ENCODE measurements at regions of chr2 and their contacts with region 1.

Region 1: GRCh38 chr2:230712443-230713330 is at the start of gene CAB39:
- DNase-seq: peak; percentile 96
- ATAC-seq: peak; percentile 91
- H3K4me3 ChIP-seq: peak within 1 kb of the TSS; percentile 68 to 89 (median 78)
- H3K4me3 Mint-ChIP-seq: peak within 1 kb of the TSS; percentile 93
- H3K27ac ChIP-seq: peak within 1 kb of the TSS; percentile 59 to 84
- H3K27ac Mint-ChIP-seq: peak within 1 kb of the TSS; percentile 94
- H3K4me1 ChIP-seq: peaks cover 41% of the 10 kb centered on the region in 2 donors
- H3K4me1 Mint-ChIP-seq: peaks cover 48% of the 10 kb centered on the region
- H3K27me3 ChIP-seq: no peaks in the 10 kb centered on the region
- H3K27me3 Mint-ChIP-seq: no peaks in the 10 kb centered on the region
- CTCF ChIP-seq: peak; percentile 83
- total RNA-seq, gene CAB39: 72.5 and 75.7 TPM in 2 replicates

Region 2: GRCh38 chr2:230068016-230068650 is 644.6 kb before region 1 on chr2:
- CTCF ChIA-PET with region 1: interaction called, 5 read pairs
- POLR2A ChIA-PET with region 1: no interaction called
- intact Hi-C with region 1: loop called (anchors 5 kb)
- DNase-seq: peak; percentile 75
- ATAC-seq: peak; percentile 34
- H3K4me3 ChIP-seq: peak overlapping the region; percentile 47 to 76 (median 67)
- H3K4me3 Mint-ChIP-seq: peak overlapping the region; percentile 96
- H3K27ac ChIP-seq: no peak overlapping the region
- H3K27ac Mint-ChIP-seq: peak overlapping the region; percentile 83
- H3K4me1 ChIP-seq: peaks cover 8 to 18% of the 10 kb centered on the region in 2 donors
- H3K4me1 Mint-ChIP-seq: peaks cover 20% of the 10 kb centered on the region
- H3K27me3 ChIP-seq: peaks cover 0 to 9% (median 2%) of the 10 kb centered on the region in 4 experiments
- H3K27me3 Mint-ChIP-seq: peaks cover 13% of the 10 kb centered on the region
- CTCF ChIP-seq: no peak

Region 3: GRCh38 chr2:230160112-230160660 is 552.5 kb before region 1 on chr2:
- CTCF ChIA-PET with region 1: no interaction called
- POLR2A ChIA-PET with region 1: no interaction called
- intact Hi-C with region 1: no loop called
- DNase-seq: peak; percentile 71
- ATAC-seq: peak; percentile 63
- H3K4me3 ChIP-seq: no peak overlapping the region
- H3K4me3 Mint-ChIP-seq: no peak overlapping the region
- H3K27ac ChIP-seq: no peak overlapping the region
- H3K27ac Mint-ChIP-seq: peak overlapping the region; percentile 15
- H3K4me1 ChIP-seq: peaks cover 0 to 15% of the 10 kb centered on the region in 2 donors
- H3K4me1 Mint-ChIP-seq: peaks cover 21% of the 10 kb centered on the region
- H3K27me3 ChIP-seq: no peaks in the 10 kb centered on the region
- H3K27me3 Mint-ChIP-seq: no peaks in the 10 kb centered on the region
- CTCF ChIP-seq: peak; percentile 89

Region 4: GRCh38 chr2:230225486-230225885 is 487.2 kb before region 1 on chr2 and contains the start of gene SP140:
- CTCF ChIA-PET with region 1: no interaction called
- POLR2A ChIA-PET with region 1: no interaction called
- intact Hi-C with region 1: loop called (anchors 2 kb)
- DNase-seq: peak; percentile 91
- ATAC-seq: peak; percentile 77
- H3K4me3 ChIP-seq: peak within 1 kb of the TSS; percentile 51 to 96 (median 72)
- H3K4me3 Mint-ChIP-seq: peak within 1 kb of the TSS; percentile 88
- H3K27ac ChIP-seq: peak within 1 kb of the TSS; percentile 86 to 87
- H3K27ac Mint-ChIP-seq: peak within 1 kb of the TSS; percentile 96
- H3K4me1 ChIP-seq: peaks cover 58 to 74% of the 10 kb centered on the region in 2 donors
- H3K4me1 Mint-ChIP-seq: peaks cover 76% of the 10 kb centered on the region
- H3K27me3 ChIP-seq: no peaks in the 10 kb centered on the region
- H3K27me3 Mint-ChIP-seq: no peaks in the 10 kb centered on the region
- CTCF ChIP-seq: no peak
- total RNA-seq, gene SP140: 411 and 424 TPM in 2 replicates

Region 5: DNA sequence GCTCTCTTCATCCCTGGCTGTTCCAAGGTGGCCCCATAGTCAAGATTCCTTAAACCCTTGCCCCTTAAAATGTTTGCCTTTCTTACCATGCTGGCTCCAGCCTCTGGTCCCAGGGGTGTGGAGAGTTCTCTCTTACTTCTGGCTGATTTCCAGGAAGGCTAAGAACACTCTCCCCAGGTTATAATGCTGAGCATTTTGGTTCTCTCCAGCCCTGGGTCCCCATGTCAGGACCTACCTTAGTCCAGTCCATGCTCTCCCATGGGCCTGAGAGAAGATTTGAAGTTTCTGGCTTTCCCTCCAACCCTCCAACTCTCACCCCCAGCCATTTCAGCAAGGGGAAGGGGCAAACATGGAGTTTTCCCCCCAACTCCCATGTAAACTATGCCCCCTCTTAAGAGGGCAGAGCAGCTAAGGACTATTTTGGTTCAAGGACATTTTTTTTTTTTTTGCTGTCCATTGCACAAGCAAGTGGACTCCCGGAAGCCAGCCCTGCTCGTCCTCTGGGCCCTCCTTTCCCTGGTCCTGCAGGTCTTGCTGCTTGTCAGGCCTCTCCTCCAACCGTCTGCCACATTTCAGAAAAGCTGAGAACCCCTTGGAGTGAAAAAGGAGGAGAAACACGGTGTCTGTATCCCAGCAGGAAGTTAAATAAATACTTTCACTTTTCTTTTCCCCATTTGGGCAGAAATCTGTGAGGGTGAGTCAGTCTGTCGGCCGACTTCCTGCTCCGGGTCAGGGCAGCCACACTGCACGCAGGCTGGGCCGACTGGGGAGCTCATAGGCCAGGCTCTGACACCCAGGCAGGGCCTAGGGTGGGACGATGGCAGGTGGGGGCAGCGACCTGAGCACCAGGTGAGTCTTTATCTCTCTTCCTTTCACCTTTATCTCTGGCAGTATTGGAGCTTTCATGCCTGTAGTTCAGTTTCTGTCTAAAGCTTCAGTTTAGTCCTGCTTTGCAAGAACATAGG is 386.0 kb before region 1 on chr2 and contains the start of gene SP140L:
- CTCF ChIA-PET with region 1: interaction called, 3 read pairs
- POLR2A ChIA-PET with region 1: no interaction called
- intact Hi-C with region 1: loop called (anchors 5 kb)
- DNase-seq: peak; percentile 78
- ATAC-seq: peak; percentile 94
- H3K4me3 ChIP-seq: peak within 1 kb of the TSS; percentile 62 to 83 (median 72)
- H3K4me3 Mint-ChIP-seq: peak within 1 kb of the TSS; percentile 98
- H3K27ac ChIP-seq: peak within 1 kb of the TSS; percentile 95
- H3K27ac Mint-ChIP-seq: peak within 1 kb of the TSS; percentile 99
- H3K4me1 ChIP-seq: peaks cover 52 to 72% of the 10 kb centered on the region in 2 donors
- H3K4me1 Mint-ChIP-seq: peaks cover 73% of the 10 kb centered on the region
- H3K27me3 ChIP-seq: no peaks in the 10 kb centered on the region
- H3K27me3 Mint-ChIP-seq: no peaks in the 10 kb centered on the region
- CTCF ChIP-seq: no peak
- total RNA-seq, gene SP140L: 154 and 167 TPM in 2 replicates

Region 6: DNA sequence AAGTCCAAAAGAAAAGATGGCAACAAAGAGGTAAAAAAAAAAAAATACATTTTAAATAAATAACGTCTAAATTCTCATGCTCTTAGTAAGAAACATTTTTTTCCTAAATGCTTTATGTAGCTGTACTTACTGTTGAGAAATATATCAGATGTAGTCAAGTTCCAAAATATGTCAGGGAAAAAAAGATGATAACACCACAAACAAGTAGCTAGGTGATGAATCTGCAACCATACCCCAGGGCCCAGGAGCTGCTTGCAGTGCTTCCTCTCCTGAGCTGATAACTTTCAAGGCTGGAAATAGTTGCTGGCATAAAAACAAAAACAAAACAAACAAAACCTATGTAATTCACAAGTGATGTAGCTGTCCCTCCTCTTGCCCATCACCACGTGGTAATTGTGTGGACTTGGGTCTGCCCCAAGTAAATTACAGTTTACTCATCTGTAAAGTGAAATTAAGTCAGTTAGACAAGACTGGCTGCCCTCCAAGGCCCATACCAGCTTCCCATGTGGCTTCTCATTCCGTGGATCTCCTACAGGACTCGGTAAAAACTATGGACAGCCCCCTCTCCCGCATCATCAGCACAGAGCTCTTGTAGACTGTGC is 214.1 kb before region 1 on chr2:
- CTCF ChIA-PET with region 1: no interaction called
- POLR2A ChIA-PET with region 1: no interaction called
- intact Hi-C with region 1: no loop called
- DNase-seq: no peak
- ATAC-seq: no peak
- H3K4me3 ChIP-seq: no peak overlapping the region
- H3K4me3 Mint-ChIP-seq: no peak overlapping the region
- H3K27ac ChIP-seq: peak overlapping the region in 1 of 2 donors; percentile 83
- H3K27ac Mint-ChIP-seq: peak overlapping the region; percentile 80
- H3K4me1 ChIP-seq: peaks cover 28 to 37% of the 10 kb centered on the region in 2 donors
- H3K4me1 Mint-ChIP-seq: peaks cover 51% of the 10 kb centered on the region
- H3K27me3 ChIP-seq: no peaks in the 10 kb centered on the region
- H3K27me3 Mint-ChIP-seq: no peaks in the 10 kb centered on the region
- CTCF ChIP-seq: no peak

Region 7: DNA sequence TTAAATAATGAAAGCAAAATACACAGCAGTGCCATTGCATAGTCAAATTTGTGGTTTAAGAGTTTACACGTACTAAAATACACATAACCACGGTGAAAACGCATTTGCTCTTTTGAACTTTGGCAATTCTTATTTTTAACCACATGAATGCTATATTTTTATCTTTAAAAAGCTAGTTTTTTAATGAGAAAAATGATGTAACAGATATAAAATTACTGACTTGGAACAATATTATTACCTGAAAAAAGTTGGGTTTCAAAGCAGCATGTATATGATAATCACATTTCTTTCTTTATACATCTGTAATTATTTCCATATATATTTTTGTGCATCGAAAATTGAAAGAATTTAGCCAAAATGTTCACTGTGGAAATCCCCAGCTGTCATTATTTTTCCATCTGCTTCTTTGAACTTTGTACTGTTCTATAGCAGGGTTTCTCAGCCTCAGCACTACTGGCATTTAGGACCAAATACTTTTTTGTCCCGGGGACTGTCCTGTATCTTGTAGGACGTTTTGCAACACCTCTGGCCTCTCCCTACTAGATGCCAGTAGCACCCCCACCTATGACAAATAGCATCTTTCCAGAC is 75.9 kb before region 1 on chr2:
- CTCF ChIA-PET with region 1: no interaction called
- POLR2A ChIA-PET with region 1: interaction called, 10 read pairs
- intact Hi-C with region 1: no loop called
- DNase-seq: no peak
- ATAC-seq: no peak
- H3K4me3 ChIP-seq: peak overlapping the region in 1 of 5 experiments; percentile 29
- H3K4me3 Mint-ChIP-seq: no peak overlapping the region
- H3K27ac ChIP-seq: no peak overlapping the region
- H3K27ac Mint-ChIP-seq: no peak overlapping the region
- H3K4me1 ChIP-seq: peaks cover 11 to 18% of the 10 kb centered on the region in 2 donors
- H3K4me1 Mint-ChIP-seq: peaks cover 24% of the 10 kb centered on the region
- H3K27me3 ChIP-seq: no peaks in the 10 kb centered on the region
- H3K27me3 Mint-ChIP-seq: no peaks in the 10 kb centered on the region
- CTCF ChIP-seq: no peak

Region 8: DNA sequence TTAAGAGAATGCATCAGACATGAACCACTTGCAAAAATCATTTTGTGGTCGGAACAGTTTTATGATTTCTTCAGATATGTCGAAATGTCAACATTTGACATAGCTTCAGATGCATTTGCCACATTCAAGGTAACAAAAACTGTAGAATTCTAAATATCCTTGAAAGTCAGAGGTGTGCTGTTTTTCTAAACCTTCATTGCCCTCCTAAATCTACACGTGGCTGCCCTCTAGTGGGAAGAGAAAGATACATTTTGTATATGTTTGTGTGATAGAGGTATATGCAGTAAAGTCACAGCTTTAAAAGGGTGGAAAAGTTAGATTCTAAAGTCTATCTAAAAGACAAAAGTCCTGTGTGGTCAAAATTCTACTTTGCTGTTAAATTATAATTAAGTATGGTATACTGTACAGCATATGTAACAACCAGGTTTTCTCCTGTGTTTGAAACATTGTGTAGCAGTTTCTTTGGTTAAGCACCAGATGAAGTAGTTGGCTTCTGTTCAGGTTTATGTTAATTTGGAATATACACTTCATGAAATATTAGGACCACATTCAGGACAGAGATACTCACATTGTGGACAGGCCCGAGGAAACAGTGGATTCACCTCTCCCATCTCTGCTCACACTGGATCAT is 86.2 kb after region 1 on chr2:
- CTCF ChIA-PET with region 1: interaction called, 13 read pairs
- POLR2A ChIA-PET with region 1: no interaction called
- intact Hi-C with region 1: loop called (anchors 2 kb)
- DNase-seq: peak; percentile 61
- ATAC-seq: no peak
- H3K4me3 ChIP-seq: no peak overlapping the region
- H3K4me3 Mint-ChIP-seq: no peak overlapping the region
- H3K27ac ChIP-seq: no peak overlapping the region
- H3K27ac Mint-ChIP-seq: peak overlapping the region; percentile 44
- H3K4me1 ChIP-seq: peaks cover 26 to 29% of the 10 kb centered on the region in 2 donors
- H3K4me1 Mint-ChIP-seq: peaks cover 18% of the 10 kb centered on the region
- H3K27me3 ChIP-seq: no peaks in the 10 kb centered on the region
- H3K27me3 Mint-ChIP-seq: no peaks in the 10 kb centered on the region
- CTCF ChIP-seq: peak; percentile 80